Transverse colon (tissue), 4 donors: ENCODE measurements at regions of chr13 and their contacts with region 1.

Region 1: DNA sequence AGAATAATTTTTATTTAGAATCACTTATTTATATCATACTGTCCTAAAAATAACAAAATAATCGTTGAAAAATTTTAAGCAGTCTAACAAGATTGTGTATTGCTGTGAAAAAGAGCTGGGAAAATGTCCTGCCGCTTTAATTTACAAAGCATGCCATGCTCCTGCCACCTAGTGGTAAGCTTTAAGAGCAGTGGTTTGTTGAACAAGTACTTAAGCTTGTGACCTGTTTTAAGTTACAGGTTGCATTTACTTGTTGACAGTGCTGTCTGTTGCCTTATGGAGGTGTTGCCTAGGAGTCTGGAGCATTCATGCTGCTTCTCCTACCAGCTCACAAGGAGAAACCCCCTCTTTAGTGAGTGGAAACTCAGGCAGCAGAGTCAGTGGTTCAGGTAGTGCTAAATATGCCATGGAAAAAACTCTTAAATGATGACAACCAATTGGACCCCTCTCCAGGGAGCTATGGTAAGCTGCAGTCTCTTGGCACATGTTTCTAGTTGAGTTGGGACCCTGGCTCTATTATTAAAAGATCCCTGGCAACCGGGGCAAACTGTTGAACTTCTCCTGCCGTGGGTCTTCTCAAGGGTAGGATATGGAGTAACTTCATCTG is 68.4 kb downstream of the SPATA13 start:
- DNase-seq: no peak
- H3K4me3 ChIP-seq: no peak overlapping the region
- H3K27ac ChIP-seq: no peak overlapping the region
- H3K4me1 ChIP-seq: peaks cover 0 to 25% (median 1%) of the 10 kb centered on the region in 4 donors
- H3K27me3 ChIP-seq: no peaks in the 10 kb centered on the region
- CTCF ChIP-seq: peak; percentile 77 to 89 (median 79)
- EP300 ChIP-seq: no peak
- POLR2A ChIP-seq: no peak

Region 2: GRCh38 chr13:24020375-24020830 is 208.6 kb before region 1 on chr13:
- in situ Hi-C with region 1: loop called in 3 of 4 experiments (anchors 10 to 25 kb)
- intact Hi-C with region 1: loop called (anchors 5 kb)
- DNase-seq: peak; percentile 55
- H3K4me3 ChIP-seq: no peak overlapping the region
- H3K27ac ChIP-seq: no peak overlapping the region
- H3K4me1 ChIP-seq: no peaks in the 10 kb centered on the region
- H3K27me3 ChIP-seq: no peaks in the 10 kb centered on the region
- CTCF ChIP-seq: peak; percentile 65 to 82 (median 70)
- EP300 ChIP-seq: no peak
- POLR2A ChIP-seq: no peak

Region 3: DNA sequence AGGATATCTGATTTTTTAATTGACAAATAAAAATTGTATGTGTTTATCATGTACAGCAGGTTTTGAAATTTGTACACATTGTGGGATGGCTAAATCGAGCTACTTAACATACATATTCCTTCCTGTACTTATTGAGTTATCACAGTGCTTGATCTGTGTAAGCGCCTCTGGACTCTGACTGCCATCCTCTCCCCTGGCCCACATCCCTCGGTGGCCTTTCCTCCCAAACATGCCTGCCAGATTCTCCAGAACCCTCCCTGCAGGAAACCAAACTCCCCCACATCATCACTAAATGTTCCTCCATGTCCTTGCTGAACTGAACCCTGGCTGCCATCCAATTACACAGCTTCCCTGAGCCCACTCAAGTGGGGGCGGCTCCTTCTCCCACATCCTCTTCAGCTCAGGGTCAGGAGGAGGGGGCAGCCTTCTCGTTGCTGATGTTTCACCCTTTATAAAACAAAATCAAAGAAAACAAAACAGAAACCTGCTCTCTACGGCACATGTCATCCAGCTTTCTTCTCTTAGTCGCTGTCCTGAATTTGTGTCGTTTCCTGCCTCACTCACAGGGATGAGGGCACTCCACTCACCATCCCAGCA is 165.6 kb before region 1 on chr13:
- in situ Hi-C with region 1: loop called in 2 of 4 experiments (anchors 5 to 10 kb)
- intact Hi-C with region 1: loop called (anchors 5 kb)
- DNase-seq: no peak
- H3K4me3 ChIP-seq: no peak overlapping the region
- H3K27ac ChIP-seq: no peak overlapping the region
- H3K4me1 ChIP-seq: no peaks in the 10 kb centered on the region
- H3K27me3 ChIP-seq: no peaks in the 10 kb centered on the region
- CTCF ChIP-seq: no peak
- EP300 ChIP-seq: no peak
- POLR2A ChIP-seq: no peak